GM10248 (cell line): ENCODE measurements at regions of chr13 and their contacts with region 1.

Region 1: GRCh38 chr13:46961719-46962118 is 64.9 kb upstream of the HTR2A start:
- DNase-seq: peak; percentile 71
- CTCF ChIP-seq: no peak

Region 2: DNA sequence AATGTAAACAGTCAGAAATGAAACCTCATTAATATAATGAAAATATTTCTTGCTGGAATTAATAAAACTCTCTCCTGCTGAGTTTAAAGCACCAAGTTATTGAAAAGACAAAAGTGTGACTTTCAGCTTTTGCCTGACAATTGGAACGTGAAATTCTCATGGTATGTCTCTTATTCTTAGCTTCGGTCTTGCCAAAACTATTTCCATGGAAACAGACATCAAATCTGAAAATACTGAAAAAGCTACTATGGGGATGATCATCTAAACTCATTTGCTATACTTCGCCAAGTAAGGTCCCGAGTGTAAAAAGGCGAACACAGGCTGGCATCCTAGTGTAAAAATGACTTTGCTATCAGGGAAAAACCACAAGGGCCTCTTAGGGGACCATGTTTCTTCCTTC is 87.7 kb before region 1 on chr13:
- CTCF ChIA-PET with region 1: no interaction called
- POLR2A ChIA-PET with region 1: no interaction called
- DNase-seq: no peak
- CTCF ChIP-seq: no peak

Region 3: DNA sequence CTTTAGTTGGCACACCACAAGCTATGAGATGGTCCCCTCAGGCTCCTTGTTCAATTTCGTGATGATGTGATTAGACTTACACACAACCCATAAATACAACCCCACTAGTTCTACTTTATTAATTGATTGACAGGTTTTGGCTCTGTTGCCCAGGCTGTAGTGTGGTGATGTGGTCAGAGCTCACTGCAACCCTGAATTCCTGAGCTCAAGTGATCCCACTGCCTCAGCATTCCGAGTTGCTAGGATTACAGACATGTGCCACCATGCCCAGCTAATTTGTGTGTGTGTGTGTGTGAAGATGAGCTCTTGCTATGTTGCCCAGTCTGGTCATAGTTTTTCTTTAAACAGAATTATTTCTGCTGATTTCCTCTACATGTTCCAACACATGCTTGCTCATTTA is 47.4 kb before region 1 on chr13:
- CTCF ChIA-PET with region 1: no interaction called
- POLR2A ChIA-PET with region 1: no interaction called
- DNase-seq: no peak
- CTCF ChIP-seq: no peak

Region 4: GRCh38 chr13:46975173-46975572 is 13.5 kb after region 1 on chr13:
- CTCF ChIA-PET with region 1: interaction called, 24 read pairs
- POLR2A ChIA-PET with region 1: no interaction called
- DNase-seq: no peak
- CTCF ChIP-seq: no peak

Region 5: DNA sequence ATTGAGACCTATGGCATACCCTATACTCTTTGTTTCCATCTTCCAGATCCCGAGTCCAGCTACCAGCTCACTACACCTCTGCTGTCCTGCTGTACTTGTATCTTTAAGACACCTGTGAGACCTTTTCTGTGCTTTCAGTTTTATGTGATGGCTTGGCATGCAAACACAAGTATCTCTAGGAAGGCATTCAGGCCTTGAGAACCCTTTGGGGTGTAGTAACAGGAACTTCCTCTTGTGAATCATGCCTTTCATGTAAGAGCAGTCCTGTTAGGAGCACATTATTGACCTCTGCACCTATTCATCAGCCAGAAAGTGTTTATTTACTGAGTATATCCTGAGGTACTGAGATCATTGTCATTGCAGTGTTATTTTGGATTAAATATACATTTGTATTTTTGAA is 22.2 kb after region 1 on chr13:
- CTCF ChIA-PET with region 1: interaction called, 30 read pairs
- POLR2A ChIA-PET with region 1: interaction called, 6 read pairs
- DNase-seq: peak; percentile 48
- CTCF ChIP-seq: no peak

Region 6: GRCh38 chr13:46992383-46992952 is 30.7 kb after region 1 on chr13:
- CTCF ChIA-PET with region 1: interaction called, 30 read pairs
- POLR2A ChIA-PET with region 1: no interaction called
- DNase-seq: no peak
- CTCF ChIP-seq: peak; percentile 21

Region 7: GRCh38 chr13:48232456-48233045 is 1270.8 kb after region 1 on chr13:
- CTCF ChIA-PET with region 1: no interaction called
- POLR2A ChIA-PET with region 1: interaction called, 10 read pairs
- DNase-seq: no peak
- CTCF ChIP-seq: no peak